ENCODE measurements at regions of chr6 and their contacts with region 1.

Region 1: GRCh38 chr6:43496370-43497128 is 13.6 kb downstream of the LRRC73 start:
- DNase-seq: peak; percentile 66 to 73
- H3K4me3 ChIP-seq: no peak overlapping the region
- H3K4me3 Mint-ChIP-seq: no peak overlapping the region
- H3K27ac Mint-ChIP-seq: no peak overlapping the region
- H3K4me1 ChIP-seq: peaks cover 37% of the 10 kb centered on the region
- H3K4me1 Mint-ChIP-seq: peaks cover 20% of the 10 kb centered on the region
- H3K27me3 ChIP-seq: no peaks in the 10 kb centered on the region
- H3K27me3 Mint-ChIP-seq: no peaks in the 10 kb centered on the region
- CTCF ChIP-seq: peak; percentile 49 to 70

Region 2: GRCh38 chr6:43386492-43386891 is 110.1 kb before region 1 on chr6:
- CTCF ChIA-PET with region 1: interaction called, 10 read pairs
- POLR2A ChIA-PET with region 1: no interaction called
- intact Hi-C with region 1: no loop called
- DNase-seq: no peak
- H3K4me3 ChIP-seq: no peak overlapping the region
- H3K4me3 Mint-ChIP-seq: no peak overlapping the region
- H3K27ac Mint-ChIP-seq: no peak overlapping the region
- H3K4me1 ChIP-seq: peaks cover 23% of the 10 kb centered on the region
- H3K4me1 Mint-ChIP-seq: peaks cover 18% of the 10 kb centered on the region
- H3K27me3 ChIP-seq: no peaks in the 10 kb centered on the region
- H3K27me3 Mint-ChIP-seq: no peaks in the 10 kb centered on the region
- CTCF ChIP-seq: peak; percentile 15 to 54

Region 3: DNA sequence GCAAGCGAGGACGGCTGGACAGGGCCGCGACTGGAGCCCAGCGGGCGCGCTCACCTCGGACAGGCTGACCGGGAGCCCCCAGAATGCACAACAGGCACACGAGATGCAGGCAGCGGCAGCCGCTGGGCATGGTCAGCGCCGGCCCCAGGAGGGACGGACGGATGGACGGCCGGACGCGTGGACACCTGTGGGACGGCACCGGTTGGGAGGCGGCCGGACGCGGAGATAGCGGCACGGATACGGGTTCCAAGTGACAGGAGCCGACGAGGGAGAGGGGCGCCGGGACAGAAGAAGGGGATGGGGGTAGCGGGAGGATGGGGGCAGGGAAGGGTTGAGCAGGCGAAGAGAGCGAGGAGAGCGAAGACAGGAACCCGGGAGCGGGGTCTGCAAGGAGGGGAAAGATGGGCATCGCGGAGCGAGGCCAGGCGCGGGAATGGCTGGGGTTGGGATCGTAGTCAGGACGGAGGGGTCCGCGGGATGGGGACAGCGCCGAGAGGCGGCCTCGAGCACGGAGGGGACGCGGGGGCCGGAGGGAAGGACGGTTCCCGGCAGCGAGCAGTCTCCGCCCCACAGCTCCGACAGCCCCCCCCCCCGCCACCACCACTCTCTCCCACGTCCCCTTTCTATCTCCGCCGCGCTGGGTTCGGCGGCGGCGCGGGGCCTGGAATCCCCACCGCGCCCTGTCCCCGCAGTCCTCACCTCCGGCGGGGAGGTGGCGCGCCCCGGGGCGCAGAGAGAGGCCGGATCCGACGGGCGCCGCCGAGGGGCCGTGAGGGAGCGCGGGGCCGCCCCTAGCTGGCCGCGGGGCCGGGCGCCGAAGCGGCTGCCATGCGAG is 41.6 kb before region 1 on chr6:
- CTCF ChIA-PET with region 1: interaction called, 19 read pairs
- POLR2A ChIA-PET with region 1: no interaction called
- intact Hi-C with region 1: loop called (anchors 1 kb)
- DNase-seq: peak; percentile 78 to 89
- H3K4me3 ChIP-seq: peak overlapping the region; percentile 62
- H3K4me3 Mint-ChIP-seq: peak overlapping the region; percentile 78
- H3K27ac Mint-ChIP-seq: no peak overlapping the region
- H3K4me1 ChIP-seq: peaks cover 7% of the 10 kb centered on the region; the same call in 1 of the 2 replicates
- H3K4me1 Mint-ChIP-seq: no peaks in the 10 kb centered on the region
- H3K27me3 ChIP-seq: no peaks in the 10 kb centered on the region
- H3K27me3 Mint-ChIP-seq: no peaks in the 10 kb centered on the region
- CTCF ChIP-seq: no peak

Region 4: DNA sequence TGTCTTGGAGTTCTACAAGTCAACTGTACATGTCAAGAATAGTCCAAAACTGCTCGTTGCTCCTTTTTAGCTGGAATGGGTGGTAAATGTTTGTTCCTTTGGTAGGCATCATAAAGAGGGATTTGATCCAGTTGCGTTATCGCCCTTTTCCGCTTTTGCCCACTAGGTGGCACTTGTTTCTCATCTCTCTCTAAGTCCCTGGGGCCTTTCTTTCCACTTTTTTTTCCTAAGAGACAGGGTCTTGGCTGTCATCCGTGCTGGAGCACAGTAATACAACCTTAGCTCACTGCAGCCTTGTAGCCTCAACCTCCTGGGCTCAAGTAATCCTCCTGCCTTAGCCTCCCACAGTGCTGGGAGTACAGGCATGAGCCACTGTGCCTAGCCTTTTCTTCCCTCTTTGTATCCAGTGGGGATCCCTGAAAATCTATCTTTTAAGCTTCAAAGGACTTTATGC is 111.8 kb after region 1 on chr6:
- CTCF ChIA-PET with region 1: no interaction called
- POLR2A ChIA-PET with region 1: no interaction called
- intact Hi-C with region 1: no loop called
- DNase-seq: peak; percentile 57 to 72
- H3K4me3 ChIP-seq: no peak overlapping the region
- H3K4me3 Mint-ChIP-seq: no peak overlapping the region
- H3K27ac Mint-ChIP-seq: no peak overlapping the region
- H3K4me1 ChIP-seq: peaks cover 5% of the 10 kb centered on the region
- H3K4me1 Mint-ChIP-seq: peaks cover 9% of the 10 kb centered on the region
- H3K27me3 ChIP-seq: no peaks in the 10 kb centered on the region
- H3K27me3 Mint-ChIP-seq: no peaks in the 10 kb centered on the region
- CTCF ChIP-seq: peak; percentile 51 to 78

Measured in Caco-2 (cell line).